PC-9 (cell line): ENCODE measurements at regions of chr3 and their contacts with region 1.

Region 1: DNA sequence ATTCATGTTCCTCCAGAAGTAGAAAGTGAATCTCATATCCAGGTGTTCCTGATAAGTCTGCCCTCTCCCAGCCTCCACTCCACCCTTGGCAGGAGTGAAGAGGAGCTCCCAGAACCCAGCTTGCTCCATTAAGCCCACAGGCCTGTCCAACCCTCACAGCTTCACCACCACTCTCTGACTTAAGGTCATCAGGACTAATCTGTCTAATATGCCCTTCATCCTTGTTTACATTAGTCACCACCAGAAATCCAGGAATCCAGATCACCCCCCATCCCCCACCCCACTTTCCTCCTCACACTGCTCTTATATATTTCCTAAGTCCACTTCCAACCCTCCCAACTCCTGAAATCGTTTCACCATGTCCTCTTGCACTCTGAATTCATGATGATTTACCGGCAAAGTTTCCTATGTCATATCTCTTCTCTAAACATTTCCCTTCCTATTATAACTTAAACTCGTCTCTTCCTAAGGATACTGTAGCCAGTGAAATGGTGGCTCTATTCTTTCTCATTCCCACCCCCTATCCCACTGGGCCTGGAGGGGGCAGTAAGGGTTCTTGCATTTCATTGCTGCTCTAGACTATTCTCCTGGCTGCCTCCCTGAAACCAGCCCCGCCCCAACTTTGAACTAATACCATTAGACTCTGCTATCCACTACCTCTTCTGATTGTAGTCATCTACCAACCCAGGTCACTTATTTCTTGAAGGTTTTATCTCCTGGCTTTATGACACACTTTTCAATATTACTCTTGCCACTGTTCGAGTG is 43.4 kb downstream of the PPP2R3A start:
- DNase-seq: peak; percentile 40 to 59
- H3K4me3 ChIP-seq: no peak overlapping the region
- H3K27ac ChIP-seq: peak overlapping the region; percentile 20; the same call in 1 of the 2 replicates
- H3K4me1 ChIP-seq: peaks cover 15% of the 10 kb centered on the region
- H3K27me3 ChIP-seq: no peaks in the 10 kb centered on the region
- CTCF ChIP-seq: no peak

Region 2: DNA sequence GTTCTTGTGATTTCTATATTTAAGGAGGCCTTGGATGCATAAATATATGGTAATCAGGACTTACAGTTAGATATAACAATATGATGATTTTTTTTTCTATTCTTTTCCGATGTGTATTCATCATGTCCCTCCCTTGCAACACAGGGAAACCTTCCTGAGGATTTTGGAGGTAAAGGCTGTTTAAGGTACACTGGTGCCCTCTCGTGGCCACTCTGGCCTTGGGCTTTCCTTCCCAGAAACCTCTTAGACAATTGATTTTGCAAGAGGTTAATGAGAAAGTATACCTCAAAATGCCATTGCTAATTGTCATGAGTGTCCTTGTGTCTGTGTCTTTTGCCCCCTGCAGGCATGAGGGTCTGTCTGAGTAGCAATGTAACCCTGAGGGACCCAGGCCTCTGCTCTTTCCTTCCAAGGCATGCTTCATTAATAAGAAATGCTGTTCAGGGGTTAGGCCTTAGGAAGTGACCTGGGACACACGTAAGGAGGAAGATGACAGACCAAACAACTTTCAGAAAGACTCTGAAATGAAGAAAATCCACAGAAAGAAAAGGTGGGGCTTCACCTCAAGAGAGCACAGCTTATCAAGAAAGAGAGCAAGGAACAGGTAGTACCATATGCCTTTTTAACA is 113.7 kb before region 1 on chr3:
- CTCF ChIA-PET with region 1: no interaction called
- POLR2A ChIA-PET with region 1: no interaction called
- intact Hi-C with region 1: loop called (anchors 1 kb)
- DNase-seq: peak; percentile 70 to 76
- H3K4me3 ChIP-seq: no peak overlapping the region
- H3K27ac ChIP-seq: no peak overlapping the region
- H3K4me1 ChIP-seq: peaks cover 20% of the 10 kb centered on the region
- H3K27me3 ChIP-seq: no peaks in the 10 kb centered on the region
- CTCF ChIP-seq: peak; percentile 90

Region 3: GRCh38 chr3:135905058-135905724 is 103.7 kb before region 1 on chr3:
- CTCF ChIA-PET with region 1: no interaction called
- POLR2A ChIA-PET with region 1: no interaction called
- intact Hi-C with region 1: loop called (anchors 1 kb)
- DNase-seq: no peak
- H3K4me3 ChIP-seq: no peak overlapping the region
- H3K27ac ChIP-seq: no peak overlapping the region
- H3K4me1 ChIP-seq: peaks cover 26% of the 10 kb centered on the region
- H3K27me3 ChIP-seq: no peaks in the 10 kb centered on the region
- CTCF ChIP-seq: no peak

Region 4: DNA sequence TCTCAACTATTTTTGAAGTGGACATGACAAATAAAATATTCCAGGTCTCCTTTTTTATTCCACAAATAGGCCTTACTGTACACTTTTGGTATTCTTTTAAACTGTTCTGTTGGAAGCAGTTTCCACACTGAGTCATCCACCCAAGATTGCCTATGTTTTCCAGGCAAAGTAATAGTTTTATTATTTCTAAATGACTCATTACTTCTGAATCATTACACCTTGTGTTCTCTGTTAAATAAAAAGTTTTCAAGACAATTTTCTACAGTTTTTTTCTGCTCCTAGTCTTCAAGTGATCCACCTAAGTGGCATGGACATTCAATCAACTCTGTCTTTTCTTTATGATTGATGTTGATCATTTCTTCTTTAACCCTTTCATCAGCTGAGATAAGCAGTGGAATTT is 16.8 kb before region 1 on chr3:
- CTCF ChIA-PET with region 1: no interaction called
- POLR2A ChIA-PET with region 1: no interaction called
- intact Hi-C with region 1: loop called (anchors 1 kb)
- DNase-seq: peak in 1 of 2 experiments; percentile 57
- H3K4me3 ChIP-seq: no peak overlapping the region
- H3K27ac ChIP-seq: 0 out of 2 replicates have a peak overlapping the region, but pooled peaks have one; percentile 4
- H3K4me1 ChIP-seq: peaks cover 16% of the 10 kb centered on the region
- H3K27me3 ChIP-seq: no peaks in the 10 kb centered on the region
- CTCF ChIP-seq: no peak

Region 5: GRCh38 chr3:136239094-136239493 is 230.2 kb after region 1 on chr3:
- CTCF ChIA-PET with region 1: no interaction called
- POLR2A ChIA-PET with region 1: no interaction called
- intact Hi-C with region 1: no loop called
- DNase-seq: no peak
- H3K4me3 ChIP-seq: no peak overlapping the region
- H3K27ac ChIP-seq: no peak overlapping the region
- H3K4me1 ChIP-seq: no peaks in the 10 kb centered on the region
- H3K27me3 ChIP-seq: no peaks in the 10 kb centered on the region
- CTCF ChIP-seq: no peak